ENCODE measurements at regions of chr1 and their contacts with region 1.

Region 1: DNA sequence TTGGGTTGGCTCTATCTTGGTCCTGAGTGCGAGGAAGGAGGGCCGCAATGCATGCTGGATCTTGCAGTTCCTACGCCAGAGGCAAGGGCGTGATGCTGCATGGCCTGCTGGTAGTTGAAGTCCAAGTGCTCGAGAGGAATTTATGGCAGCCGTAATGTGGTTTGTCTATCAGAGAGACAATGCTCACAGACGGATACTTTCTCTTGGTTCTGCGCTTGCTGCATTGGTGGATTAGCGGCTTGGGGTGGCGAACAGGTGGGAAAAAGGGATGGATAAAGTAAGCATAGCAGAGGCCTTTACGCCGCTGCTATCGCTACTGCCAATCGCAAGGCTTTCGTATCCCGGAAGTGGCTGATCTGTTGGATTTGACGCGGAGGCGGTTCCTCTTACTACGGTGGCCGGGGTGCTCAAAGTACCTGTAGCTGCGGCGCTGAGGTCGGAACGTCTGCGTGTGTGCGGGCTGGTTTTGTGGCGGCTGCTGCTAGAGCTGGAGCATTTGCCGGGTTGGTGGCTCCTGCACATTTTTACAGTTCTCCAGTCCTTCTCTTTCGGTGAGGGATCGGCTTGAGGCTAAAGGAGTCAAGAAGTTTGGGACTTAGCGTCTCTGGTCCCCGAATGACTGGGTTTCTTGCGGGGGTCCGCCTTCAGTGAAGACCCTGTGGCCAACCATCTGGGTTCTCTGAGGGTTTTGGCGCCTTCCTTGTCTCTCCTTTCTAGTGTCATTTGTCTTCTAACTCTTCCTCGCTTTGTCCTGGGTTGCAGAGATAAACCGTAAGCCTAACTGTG is at the start of gene ATG4C:
- DNase-seq: peak; percentile 97
- ATAC-seq: peak; percentile 99
- total RNA-seq, gene ATG4C: 9.4 TPM

Region 2: GRCh38 chr1:62436466-62437256 is 347.3 kb before region 1 on chr1 and contains the start of gene USP1:
- intact Hi-C with region 1: loop called (anchors 2 kb)
- DNase-seq: peak; percentile 98
- ATAC-seq: peak; percentile 95
- total RNA-seq, gene USP1: 14.1 TPM